Activated CD4-positive, alpha-beta memory T cell treated with anti-CD3 and anti-CD28 coated beads, Interleukin-2, amount 10 ng/mL, durations not matched to agents 7 days and 5 days (primary cell): ENCODE measurements at regions of chr1 and their contacts with region 1.

Region 1: DNA sequence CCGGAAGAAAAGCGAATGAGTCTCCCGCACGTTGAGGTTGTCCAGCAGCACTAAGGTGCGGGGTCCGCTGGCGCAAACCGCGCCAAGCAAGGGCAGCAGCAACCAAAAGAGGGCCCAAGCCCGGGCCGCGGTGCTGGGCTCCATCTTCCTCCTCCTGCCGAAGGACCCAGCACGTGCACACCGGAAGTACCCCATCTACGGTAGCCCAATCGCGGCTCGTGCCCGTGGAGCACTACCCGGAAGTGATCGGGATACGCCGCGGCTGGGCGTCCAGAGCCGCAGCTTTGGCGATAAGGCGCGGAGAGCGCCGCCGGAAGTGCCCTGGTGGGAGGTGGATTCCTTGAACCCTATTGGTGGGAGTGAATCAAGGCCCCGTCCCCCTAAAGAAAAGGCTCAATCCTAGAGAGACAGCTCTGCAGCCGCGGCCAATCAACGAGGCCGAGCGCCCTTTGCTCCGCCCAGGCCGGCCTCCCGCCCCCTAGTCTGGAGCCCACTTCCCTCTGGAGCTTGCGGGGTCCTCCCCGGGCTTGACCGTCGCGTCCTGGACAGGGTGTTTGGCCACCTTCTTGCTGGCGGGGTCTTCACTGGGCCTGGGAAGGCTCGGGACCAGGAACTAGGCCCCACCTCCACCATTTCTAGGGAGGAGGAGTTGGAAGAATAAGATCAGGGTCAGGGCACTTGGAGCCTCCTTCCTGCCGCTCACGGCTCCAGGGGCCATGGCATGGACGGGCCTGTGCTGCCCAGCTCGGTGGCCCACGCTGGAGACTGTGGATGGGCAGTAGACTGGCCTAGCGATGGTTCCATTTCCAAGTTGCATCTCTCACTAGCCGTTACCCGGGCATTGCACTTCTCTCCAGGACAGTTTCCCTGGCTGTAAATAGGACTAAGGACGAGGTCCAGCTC is at the start of gene DDOST:
- DNase-seq: peak; percentile 96
- H3K4me3 Mint-ChIP-seq: peak within 1 kb of the TSS; percentile 99
- H3K27ac Mint-ChIP-seq: peak within 1 kb of the TSS; percentile 97
- H3K4me1 Mint-ChIP-seq: peaks cover 52% of the 10 kb centered on the region
- H3K27me3 Mint-ChIP-seq: no peaks in the 10 kb centered on the region
- total RNA-seq, gene DDOST: 171 to 182 TPM

Region 2: GRCh38 chr1:20212685-20213331 is 448.6 kb before region 1 on chr1:
- CTCF ChIA-PET with region 1: interaction called, 10 read pairs
- POLR2A ChIA-PET with region 1: no interaction called
- DNase-seq: peak; percentile 57
- H3K4me3 Mint-ChIP-seq: no peak overlapping the region
- H3K27ac Mint-ChIP-seq: no peak overlapping the region
- H3K4me1 Mint-ChIP-seq: peaks cover 5% of the 10 kb centered on the region
- H3K27me3 Mint-ChIP-seq: peaks cover 48% of the 10 kb centered on the region

Region 3: GRCh38 chr1:20672265-20672632 is 10.8 kb after region 1 on chr1:
- CTCF ChIA-PET with region 1: no interaction called
- POLR2A ChIA-PET with region 1: no interaction called
- DNase-seq: no peak
- H3K4me3 Mint-ChIP-seq: no peak overlapping the region
- H3K27ac Mint-ChIP-seq: no peak overlapping the region
- H3K4me1 Mint-ChIP-seq: no peaks in the 10 kb centered on the region
- H3K27me3 Mint-ChIP-seq: peaks cover 33% of the 10 kb centered on the region